ENCODE measurements at regions of chr1 and their contacts with region 1.

Region 1: DNA sequence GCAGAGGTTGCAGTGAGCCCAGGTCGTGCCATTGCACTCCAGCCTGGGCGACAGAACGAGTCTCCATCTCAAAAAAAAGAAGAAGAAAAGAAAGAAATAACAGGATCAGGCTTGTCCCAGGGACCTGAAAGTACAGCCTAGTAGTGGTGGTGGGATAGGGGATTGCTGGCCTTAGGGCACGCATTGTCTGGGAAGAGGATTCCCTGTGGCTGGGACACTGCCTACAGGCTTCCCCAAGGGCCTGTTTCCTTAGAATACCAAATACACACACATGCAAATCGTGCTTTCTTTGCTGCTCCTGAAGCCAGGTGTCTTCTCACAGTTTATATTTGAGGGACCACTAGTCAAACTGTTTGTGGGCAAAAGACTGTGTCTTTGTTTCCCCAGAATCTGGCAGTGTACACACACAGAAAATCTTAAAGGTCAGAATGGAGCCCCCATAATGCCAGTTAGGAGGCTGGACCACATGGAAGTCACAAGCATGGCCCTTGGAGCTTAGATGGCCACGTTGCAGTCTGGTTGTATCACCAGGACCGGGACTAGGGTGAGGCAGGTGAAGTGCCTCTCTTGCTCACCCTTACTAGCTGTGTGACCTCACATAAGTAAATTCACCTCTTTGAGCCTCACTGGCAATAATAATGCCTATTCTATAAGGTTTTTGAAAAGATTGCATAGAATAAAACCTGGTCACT is 12.7 kb upstream of the ASAP3 start:
- DNase-seq: no peak
- ATAC-seq: peak; percentile 15 to 53 (median 35)
- H3K4me3 ChIP-seq: no peak overlapping the region
- H3K27ac ChIP-seq: no peak overlapping the region
- H3K4me1 ChIP-seq: peaks cover 4% of the 10 kb centered on the region
- H3K27me3 ChIP-seq: no peaks in the 10 kb centered on the region
- CTCF ChIP-seq: no peak

Region 2: GRCh38 chr1:23478896-23479665 is 17.6 kb before region 1 on chr1:
- intact Hi-C with region 1: no loop called
- DNase-seq: peak; percentile 90 to 96
- ATAC-seq: peak; percentile 90 to 95 (median 90)
- H3K4me3 ChIP-seq: peak overlapping the region; percentile 27
- H3K27ac ChIP-seq: peak overlapping the region; percentile 87
- H3K4me1 ChIP-seq: peaks cover 64% of the 10 kb centered on the region
- H3K27me3 ChIP-seq: no peaks in the 10 kb centered on the region
- CTCF ChIP-seq: peak; percentile 6

Region 3: DNA sequence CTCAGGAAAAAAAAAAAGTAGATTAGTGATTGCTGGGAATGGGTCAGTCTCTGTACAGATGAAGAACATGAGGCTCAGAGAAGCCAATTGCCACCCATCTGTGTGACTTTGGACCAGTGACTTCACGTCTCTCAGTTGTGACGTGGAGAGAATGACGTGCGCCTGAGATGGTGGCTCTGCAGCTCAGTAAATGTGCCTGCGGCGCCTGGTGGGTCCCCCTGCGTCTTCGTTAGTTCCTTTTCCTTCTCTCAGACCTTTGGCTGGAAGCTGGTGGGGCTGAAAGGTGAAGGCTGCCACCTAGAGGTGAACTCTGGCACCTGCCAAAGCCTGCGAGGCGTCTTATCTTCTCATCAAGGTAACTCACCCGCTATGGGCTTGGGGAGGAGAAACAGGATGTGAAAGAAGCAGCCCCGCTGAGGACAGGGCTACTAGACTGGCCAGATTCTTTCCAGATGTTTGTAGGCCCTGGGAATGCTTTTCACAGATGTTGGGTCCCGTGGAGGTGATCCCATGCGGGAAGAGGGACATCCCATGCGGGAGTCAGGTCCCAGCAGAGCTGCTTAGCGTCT is 43.1 kb after region 1 on chr1:
- intact Hi-C with region 1: loop called (anchors 2 kb)
- DNase-seq: peak; percentile 83 to 91
- ATAC-seq: peak; percentile 87 to 94 (median 89)
- H3K4me3 ChIP-seq: peak overlapping the region; percentile 26
- H3K27ac ChIP-seq: peak overlapping the region; percentile 5
- H3K4me1 ChIP-seq: peaks cover 2% of the 10 kb centered on the region
- H3K27me3 ChIP-seq: no peaks in the 10 kb centered on the region
- CTCF ChIP-seq: peak; percentile 90

Region 4: DNA sequence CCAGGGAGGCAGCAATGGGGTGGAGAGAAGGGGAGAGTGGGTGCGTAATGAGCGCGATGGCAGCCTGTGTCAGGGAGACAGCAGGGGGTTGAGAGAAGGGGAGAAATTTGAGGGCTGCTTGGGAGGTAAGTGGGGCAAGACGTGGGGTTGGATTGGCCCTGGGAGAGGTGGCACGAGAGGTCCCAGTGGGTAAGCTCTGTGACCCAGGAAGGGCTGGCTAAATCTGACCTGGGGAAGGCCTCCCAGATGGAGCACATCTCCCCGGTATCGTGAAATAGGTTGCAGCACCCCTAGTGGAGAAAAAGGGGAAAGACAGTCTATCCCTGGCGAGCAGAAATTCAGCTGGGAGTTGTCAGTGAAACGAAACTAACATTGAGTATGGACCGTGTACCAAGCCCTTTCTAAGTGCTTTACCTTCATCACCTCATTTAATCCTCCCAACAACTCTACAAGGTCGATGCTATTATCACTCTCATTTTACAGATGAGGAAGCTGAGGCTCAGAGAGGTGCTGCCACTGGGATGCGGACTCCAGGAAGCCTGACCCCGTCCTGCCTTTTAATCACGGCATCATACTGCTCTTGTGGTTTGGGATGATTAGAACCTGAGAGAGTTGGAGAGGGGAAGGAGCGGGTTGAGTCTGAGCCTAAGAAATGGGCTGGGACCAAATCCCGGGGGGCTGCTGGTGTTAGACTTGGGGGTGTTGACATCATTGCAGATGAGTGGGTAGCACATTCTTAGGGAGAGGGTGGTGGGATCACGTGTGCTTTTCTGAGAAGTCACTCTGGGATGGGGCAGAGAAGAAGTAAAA is 138.4 kb after region 1 on chr1:
- intact Hi-C with region 1: loop called in 1 of 2 experiments (anchors 5 kb)
- DNase-seq: peak; percentile 60 to 61
- ATAC-seq: peak; percentile 58 to 72 (median 68)
- H3K4me3 ChIP-seq: peak overlapping the region; percentile 61
- H3K27ac ChIP-seq: peak overlapping the region; percentile 69
- H3K4me1 ChIP-seq: peaks cover 11% of the 10 kb centered on the region
- H3K27me3 ChIP-seq: no peaks in the 10 kb centered on the region
- CTCF ChIP-seq: peak; percentile 88

Measured in psoas muscle (tissue), 8 donors.